ENCODE measurements at regions of chr10 and their contacts with region 1.

Region 1: GRCh38 chr10:7525314-7526016 is 114.6 kb upstream of the SFMBT2 start:
- DNase-seq: peak; percentile 38
- H3K4me3 ChIP-seq: no peak overlapping the region
- H3K27ac ChIP-seq: no peak overlapping the region
- H3K4me1 ChIP-seq: no peaks in the 10 kb centered on the region
- H3K27me3 ChIP-seq: no peaks in the 10 kb centered on the region
- CTCF ChIP-seq: peak; percentile 65 to 72

Region 2: GRCh38 chr10:7337431-7338171 is 187.9 kb before region 1 on chr10:
- CTCF ChIA-PET with region 1: no interaction called
- dilution Hi-C with region 1: no loop called
- in situ Hi-C with region 1: no loop called
- intact Hi-C with region 1: no loop called
- DNase-seq: no peak
- H3K4me3 ChIP-seq: no peak overlapping the region
- H3K27ac ChIP-seq: no peak overlapping the region
- H3K4me1 ChIP-seq: no peaks in the 10 kb centered on the region
- H3K27me3 ChIP-seq: no peaks in the 10 kb centered on the region
- CTCF ChIP-seq: no peak

Region 3: DNA sequence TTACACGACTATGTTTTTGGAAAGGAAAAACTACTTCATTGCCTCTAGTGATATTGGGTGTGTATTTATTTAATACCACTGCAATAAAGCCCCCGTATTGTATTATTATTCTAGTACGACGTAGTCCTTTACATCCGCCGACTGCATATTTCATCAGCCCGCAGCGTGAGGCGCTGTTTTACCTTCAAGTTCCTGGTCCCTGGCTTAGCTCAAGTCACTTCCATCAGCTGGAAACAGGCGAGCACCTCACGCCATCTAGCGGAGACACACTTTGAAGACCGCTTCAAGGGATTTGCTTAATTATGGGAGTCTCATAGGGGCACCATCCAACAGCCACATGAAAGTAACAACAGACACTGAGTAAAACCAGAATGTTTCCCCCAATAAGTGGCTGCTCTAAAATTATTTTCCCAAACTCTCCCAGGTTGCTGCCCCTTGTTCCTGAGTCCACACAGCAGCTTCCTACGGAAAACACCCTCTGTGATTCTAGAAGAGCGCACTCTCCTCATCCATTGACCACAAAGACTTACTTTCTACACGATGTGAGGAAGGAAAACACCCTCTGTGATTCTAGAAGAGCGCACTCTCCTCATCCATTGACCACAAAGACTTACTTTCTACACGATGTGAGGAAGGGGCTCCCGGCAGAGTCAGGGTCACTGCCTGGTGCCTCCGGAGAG is 161.9 kb after region 1 on chr10:
- CTCF ChIA-PET with region 1: interaction called, 23 read pairs
- dilution Hi-C with region 1: no loop called
- in situ Hi-C with region 1: loop called (anchors 5 to 10 kb)
- intact Hi-C with region 1: loop called (anchors 1 kb)
- DNase-seq: peak; percentile 73
- H3K4me3 ChIP-seq: no peak overlapping the region
- H3K27ac ChIP-seq: no peak overlapping the region
- H3K4me1 ChIP-seq: no peaks in the 10 kb centered on the region
- H3K27me3 ChIP-seq: no peaks in the 10 kb centered on the region
- CTCF ChIP-seq: peak; percentile 83 to 91

Region 4: DNA sequence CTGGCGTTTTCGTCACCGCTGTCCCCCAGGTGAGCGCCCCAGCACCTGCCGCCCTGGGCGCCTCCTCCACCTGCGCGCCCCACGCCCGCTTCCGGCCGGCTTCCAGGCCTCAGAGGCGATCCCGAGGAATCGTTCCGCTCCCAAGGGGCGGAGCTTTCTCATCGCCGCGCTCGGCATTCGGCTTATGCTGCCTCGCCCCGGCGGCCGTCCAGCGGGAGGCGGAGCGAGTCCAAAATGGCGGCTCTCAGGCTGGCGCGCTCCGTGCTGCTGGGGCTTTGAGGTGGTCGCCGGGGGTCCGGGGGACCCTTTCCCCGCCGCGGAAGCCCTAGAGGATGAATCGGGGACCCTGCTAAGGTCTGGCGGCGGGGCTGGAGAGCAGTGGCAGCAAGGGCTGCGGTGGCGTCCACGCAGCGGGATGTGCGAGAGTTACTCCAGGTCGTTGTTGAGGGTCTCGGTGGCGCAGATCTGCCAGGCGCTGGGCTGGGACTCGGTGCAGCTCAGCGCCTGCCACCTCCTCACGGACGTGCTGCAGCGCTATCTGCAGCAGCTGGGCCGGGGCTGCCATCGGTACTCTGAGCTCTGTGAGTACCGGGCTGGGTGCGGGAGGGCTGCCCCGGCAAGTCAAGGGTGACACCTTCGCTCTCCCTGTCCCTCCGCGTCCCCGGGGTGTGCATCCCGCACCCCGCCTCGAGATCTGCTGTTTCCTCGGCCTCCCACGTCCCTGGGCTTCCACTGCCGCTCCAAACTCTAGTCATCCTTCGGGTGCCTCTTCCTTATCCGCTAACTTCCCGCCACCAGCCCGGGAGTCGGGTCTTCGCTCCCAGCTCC is 293.0 kb after region 1 on chr10 and contains the start of gene TAF3:
- CTCF ChIA-PET with region 1: no interaction called
- dilution Hi-C with region 1: no loop called
- in situ Hi-C with region 1: no loop called
- intact Hi-C with region 1: loop called (anchors 1 kb)
- DNase-seq: peak; percentile 88
- H3K4me3 ChIP-seq: peak within 1 kb of the TSS; percentile 83 to 99 (median 93)
- H3K27ac ChIP-seq: peak within 1 kb of the TSS; percentile 31
- H3K4me1 ChIP-seq: peaks cover 11% of the 10 kb centered on the region
- H3K27me3 ChIP-seq: no peaks in the 10 kb centered on the region
- CTCF ChIP-seq: no peak
- total RNA-seq, gene TAF3: 2.5 to 11.2 TPM

Region 5: DNA sequence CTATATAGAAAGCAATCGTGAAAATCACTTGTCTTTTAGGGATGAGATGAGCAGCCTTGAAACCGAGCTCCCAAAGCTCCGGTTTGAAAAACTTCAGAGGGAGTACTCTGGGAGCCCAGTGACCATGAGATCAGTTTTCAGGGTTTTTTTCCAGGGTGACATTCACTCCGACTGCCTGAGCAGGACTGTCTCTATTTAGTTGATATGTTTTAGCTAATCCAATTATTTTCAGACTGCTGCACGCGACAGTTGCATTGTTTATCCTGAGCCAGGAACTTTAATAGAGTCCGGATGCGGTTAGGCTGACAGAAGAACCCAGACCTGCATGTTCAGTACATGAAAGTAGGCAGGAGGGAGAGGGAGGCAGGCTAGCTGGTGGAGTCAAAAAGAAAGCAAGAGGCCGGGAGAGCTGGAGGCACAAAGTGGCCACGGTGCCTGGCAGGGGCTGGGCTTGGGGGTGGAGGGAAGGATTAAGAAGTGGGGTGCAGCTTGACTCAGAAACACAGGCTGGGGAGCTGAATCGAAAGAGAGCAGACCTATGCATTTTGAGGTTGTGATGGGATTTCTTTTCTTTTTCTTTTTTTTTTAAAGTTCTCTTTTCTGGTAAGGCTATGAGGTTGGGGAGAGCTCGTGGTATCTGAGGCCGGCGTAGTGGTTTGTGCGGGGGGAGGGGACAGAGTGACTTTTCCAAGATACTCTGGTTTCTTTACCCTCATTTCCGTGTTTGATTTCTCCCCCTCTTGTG is 534.7 kb after region 1 on chr10:
- CTCF ChIA-PET with region 1: no interaction called
- dilution Hi-C with region 1: no loop called
- in situ Hi-C with region 1: no loop called
- intact Hi-C with region 1: loop called (anchors 5 kb)
- DNase-seq: peak; percentile 82
- H3K4me3 ChIP-seq: peak overlapping the region; percentile 86 to 90 (median 87)
- H3K27ac ChIP-seq: peak overlapping the region; percentile 76
- H3K4me1 ChIP-seq: peaks cover 63% of the 10 kb centered on the region
- H3K27me3 ChIP-seq: no peaks in the 10 kb centered on the region
- CTCF ChIP-seq: no peak

Region 6: DNA sequence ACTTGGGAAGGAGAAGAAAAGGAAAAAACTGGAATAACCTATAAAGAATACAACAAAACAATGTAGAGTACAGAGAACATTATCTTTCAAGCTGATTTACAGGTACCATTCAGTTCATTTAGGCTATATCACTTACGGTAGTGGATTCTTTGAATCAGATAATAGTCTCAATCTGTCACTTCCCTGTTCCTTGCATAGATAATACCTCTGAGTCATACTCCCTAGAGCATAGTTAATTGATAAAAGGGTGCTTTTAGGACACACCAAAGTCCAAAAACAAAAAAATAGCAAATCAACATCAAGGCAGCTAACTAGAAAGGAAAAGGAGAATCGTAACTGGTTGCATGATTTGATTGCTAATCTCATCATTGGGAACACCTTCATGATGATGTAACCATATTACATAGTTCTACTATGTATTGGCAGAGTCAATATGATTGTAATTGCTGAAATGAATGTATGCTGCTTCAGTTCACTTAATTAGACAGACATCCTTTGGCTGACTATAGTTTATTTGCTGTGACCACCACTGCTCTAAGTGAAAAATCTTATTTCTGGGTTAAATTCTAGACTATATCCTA is 1373.4 kb after region 1 on chr10:
- CTCF ChIA-PET with region 1: no interaction called
- dilution Hi-C with region 1: no loop called
- in situ Hi-C with region 1: loop called in 1 of 2 experiments (anchors 25 kb)
- intact Hi-C with region 1: no loop called
- DNase-seq: no peak
- H3K4me3 ChIP-seq: no peak overlapping the region
- H3K27ac ChIP-seq: no peak overlapping the region
- H3K4me1 ChIP-seq: no peaks in the 10 kb centered on the region
- H3K27me3 ChIP-seq: no peaks in the 10 kb centered on the region
- CTCF ChIP-seq: no peak